PC-3 (cell line): ENCODE measurements at regions of chr9 and their contacts with region 1.

Region 1: DNA sequence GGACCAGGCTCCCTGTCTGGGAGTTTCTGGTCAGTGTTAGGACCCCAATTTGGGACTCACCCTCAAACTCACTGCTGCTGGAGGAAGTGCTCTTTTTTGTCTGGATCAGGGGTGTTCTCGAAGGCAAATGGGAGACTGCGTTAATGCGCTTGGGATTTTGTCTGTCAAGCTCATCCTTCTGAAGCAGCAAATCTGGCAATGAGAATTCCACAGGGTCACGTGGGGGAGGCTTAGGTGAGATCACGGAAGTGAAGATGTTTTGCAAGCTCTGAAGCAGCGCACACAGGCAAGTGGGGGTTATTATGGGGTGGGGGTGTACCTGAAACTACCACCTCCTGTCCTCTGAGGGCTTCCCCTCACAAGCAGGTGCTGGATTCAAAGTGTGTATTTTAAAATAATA is 10.5 kb upstream of the TEX53 start:
- DNase-seq: no peak
- ATAC-seq: no peak
- H3K4me3 ChIP-seq: no peak overlapping the region
- H3K27ac ChIP-seq: no peak overlapping the region
- H3K4me1 ChIP-seq: peaks cover 11% of the 10 kb centered on the region
- H3K27me3 ChIP-seq: no peaks in the 10 kb centered on the region
- CTCF ChIP-seq: no peak

Region 2: DNA sequence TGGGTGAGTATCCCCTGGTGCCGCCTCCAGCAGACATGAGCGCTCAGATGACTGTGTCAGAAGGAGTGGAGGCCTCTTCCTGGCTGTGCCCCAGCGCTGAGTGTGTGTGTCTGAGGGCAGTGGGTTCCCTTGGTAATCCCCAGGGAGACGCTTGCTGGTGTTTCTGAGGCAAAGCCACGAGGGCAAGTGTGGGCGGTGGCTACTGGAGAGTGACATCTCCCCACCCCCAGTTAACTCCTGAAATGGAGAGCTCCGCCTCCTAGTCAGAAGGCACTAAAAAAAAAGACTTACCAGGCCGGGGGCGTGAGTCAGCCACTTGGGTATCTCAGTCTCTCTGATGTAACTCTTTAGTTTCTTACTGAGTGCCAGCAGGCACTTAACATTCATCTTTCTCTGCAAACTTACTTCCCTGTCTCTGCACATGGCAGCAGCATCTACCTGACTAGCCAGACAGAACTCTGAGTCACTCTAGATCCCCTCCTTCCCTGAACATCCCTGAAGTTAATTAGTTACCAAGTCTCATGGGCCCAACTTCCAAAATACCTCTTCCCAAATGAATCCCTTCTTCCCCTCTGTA is 319.2 kb before region 1 on chr9:
- CTCF ChIA-PET with region 1: no interaction called
- POLR2A ChIA-PET with region 1: no interaction called
- intact Hi-C with region 1: no loop called
- DNase-seq: peak; percentile 72
- ATAC-seq: peak; percentile 87
- H3K4me3 ChIP-seq: no peak overlapping the region
- H3K27ac ChIP-seq: peak overlapping the region; percentile 29; the same call in 1 of the 2 replicates
- H3K4me1 ChIP-seq: peaks cover 12% of the 10 kb centered on the region
- H3K27me3 ChIP-seq: no peaks in the 10 kb centered on the region
- CTCF ChIP-seq: no peak

Region 3: GRCh38 chr9:114446672-114447450 is 221.3 kb before region 1 on chr9:
- CTCF ChIA-PET with region 1: interaction called, 11 read pairs
- POLR2A ChIA-PET with region 1: no interaction called
- intact Hi-C with region 1: no loop called
- DNase-seq: no peak
- ATAC-seq: 0 out of 2 replicates have a peak, but pooled peaks have one; percentile 22
- H3K4me3 ChIP-seq: no peak overlapping the region
- H3K27ac ChIP-seq: no peak overlapping the region
- H3K4me1 ChIP-seq: peaks cover 7% of the 10 kb centered on the region; the same call in 1 of the 2 replicates
- H3K27me3 ChIP-seq: no peaks in the 10 kb centered on the region
- CTCF ChIP-seq: no peak

Region 4: DNA sequence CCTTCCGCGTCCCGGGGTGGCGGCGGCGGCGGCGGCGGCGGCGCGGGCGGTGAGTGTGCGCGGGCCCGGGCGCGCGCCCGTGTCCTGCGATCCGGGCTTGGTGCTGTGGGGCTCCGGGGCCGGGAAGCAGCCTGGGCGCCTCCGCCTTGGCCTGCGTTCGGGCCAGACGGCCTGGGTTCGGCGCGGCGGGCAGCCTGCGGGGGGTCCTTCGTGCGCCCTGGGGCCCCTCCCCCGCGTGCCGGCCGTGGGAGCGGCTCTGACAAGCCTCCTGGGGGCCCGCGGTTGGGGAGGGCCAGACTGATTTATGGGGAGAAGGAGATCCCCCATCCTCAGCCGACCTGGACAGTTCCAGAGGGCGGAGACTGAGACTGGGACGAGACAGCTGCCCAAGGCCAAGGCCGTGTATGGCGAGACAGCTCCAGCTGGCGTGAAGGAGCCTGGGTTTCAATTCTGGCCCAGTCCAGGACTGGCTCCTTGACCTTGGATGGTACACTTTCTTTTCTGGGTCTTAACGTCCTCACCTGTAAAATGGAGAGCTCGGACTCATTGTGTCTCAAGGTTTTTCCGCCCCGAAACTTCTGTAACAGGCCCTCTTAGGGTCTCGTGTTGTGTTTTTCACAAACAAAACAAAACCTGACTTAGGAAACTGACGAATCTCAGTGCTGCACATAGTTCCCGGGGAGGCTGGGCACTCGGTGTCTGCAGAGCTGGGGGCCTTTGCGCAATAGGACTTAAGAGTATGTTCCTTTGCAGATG is 56.5 kb before region 1 on chr9:
- CTCF ChIA-PET with region 1: no interaction called
- POLR2A ChIA-PET with region 1: no interaction called
- intact Hi-C with region 1: no loop called
- DNase-seq: peak; percentile 34
- ATAC-seq: peak; percentile 79
- H3K4me3 ChIP-seq: peak overlapping the region; percentile 87
- H3K27ac ChIP-seq: peak overlapping the region; percentile 56
- H3K4me1 ChIP-seq: peaks cover 22% of the 10 kb centered on the region; the same call in 1 of the 2 replicates
- H3K27me3 ChIP-seq: no peaks in the 10 kb centered on the region
- CTCF ChIP-seq: no peak

Region 5: GRCh38 chr9:114806526-114806900 is 138.4 kb after region 1 on chr9:
- CTCF ChIA-PET with region 1: no interaction called
- POLR2A ChIA-PET with region 1: no interaction called
- intact Hi-C with region 1: no loop called
- DNase-seq: no peak
- ATAC-seq: no peak
- H3K4me3 ChIP-seq: no peak overlapping the region
- H3K27ac ChIP-seq: 0 out of 2 replicates have a peak overlapping the region, but pooled peaks have one; percentile 62
- H3K4me1 ChIP-seq: peaks cover 41% of the 10 kb centered on the region
- H3K27me3 ChIP-seq: no peaks in the 10 kb centered on the region
- CTCF ChIP-seq: no peak